Sciatic nerve (tissue), 2 donors: ENCODE measurements at regions of chr7 and their contacts with region 1.

Region 1: DNA sequence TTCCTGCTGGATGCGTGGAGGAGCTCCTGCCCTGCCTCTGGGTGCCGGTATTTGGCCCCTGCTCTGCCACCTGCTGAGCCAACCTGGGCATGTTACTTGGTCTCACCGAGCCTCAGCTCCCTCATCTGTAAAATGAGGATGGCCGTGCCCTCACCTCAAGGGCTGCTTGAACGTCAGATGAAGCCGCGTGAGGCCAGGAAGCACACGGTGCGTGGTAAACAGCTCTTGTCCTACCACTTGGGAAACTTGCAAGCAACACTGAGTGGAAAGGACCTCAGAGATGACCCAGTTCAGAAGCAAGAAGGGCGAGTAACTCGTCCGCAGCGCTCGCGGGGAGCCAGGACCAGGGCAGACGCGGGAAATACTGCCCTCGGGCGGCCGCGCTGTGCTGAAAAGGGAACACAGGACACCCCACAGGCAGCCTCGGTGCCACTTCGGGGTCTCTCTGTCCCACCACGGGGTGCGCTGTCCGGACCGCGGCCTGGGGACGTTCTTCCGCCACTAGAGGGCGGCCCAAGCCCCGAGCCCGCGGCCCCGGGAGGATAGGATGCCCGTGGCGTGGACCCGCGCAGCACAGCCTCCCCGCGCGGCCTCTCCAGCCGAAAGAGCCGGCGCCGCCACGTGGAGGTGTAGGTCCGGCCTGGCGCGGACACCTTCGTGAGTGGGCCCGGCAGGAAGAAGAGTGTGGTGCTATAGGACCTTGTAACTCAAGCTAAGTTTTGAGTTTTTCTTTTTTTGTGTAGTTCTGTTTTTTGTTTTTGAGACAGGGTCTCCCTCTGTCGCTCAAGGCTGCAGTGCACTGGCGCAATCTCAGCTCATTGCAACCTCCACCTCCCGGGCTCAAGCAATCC is 94.1 kb downstream of the PRKAG2 start:
- DNase-seq: peak; percentile 87
- ATAC-seq: peak; percentile 88

Region 2: DNA sequence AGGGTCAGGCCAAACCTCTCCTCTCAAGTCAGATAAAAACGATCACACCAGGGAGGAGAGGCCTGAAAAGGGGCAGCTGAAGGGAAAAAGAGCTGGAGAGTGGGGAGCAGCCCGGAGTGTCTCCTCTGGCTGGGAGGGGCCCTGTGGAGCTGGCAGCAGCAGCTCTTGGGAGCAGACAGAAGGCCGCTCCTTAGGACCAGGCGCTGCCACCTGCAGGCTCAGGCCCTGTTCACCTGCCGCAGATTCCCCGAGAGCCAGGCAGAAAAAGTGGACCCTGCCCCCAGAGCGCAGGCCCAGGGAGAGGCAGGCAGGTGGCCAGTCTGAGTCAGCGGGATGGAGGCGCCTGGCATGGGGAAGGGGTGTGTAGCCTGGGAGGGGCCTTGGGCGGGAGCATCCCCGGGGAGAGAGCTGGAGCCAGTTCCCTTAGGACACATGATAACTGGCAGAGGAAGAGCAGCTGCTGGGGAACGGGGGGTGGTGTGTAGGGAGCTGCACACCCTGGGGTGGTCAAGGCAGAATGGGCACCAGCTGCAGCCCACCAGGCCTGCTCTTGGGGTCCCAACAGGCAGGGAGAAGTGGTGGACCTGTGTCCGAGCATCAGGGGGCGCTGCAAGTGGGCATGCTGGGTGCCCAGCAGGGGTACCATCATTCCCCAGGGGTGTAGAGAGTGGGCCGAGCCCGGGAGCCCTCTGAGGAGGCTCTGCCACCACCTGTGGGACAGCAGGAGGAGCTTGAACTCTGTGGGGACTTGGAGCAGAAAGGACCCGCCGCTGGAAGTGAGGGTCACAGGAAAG is 85.9 kb before region 1 on chr7:
- intact Hi-C with region 1: no loop called
- DNase-seq: no peak
- ATAC-seq: no peak

Region 3: GRCh38 chr7:151936207-151936606 is 153.4 kb after region 1 on chr7:
- intact Hi-C with region 1: loop called (anchors 10 kb)
- DNase-seq: no peak
- ATAC-seq: no peak

Region 4: DNA sequence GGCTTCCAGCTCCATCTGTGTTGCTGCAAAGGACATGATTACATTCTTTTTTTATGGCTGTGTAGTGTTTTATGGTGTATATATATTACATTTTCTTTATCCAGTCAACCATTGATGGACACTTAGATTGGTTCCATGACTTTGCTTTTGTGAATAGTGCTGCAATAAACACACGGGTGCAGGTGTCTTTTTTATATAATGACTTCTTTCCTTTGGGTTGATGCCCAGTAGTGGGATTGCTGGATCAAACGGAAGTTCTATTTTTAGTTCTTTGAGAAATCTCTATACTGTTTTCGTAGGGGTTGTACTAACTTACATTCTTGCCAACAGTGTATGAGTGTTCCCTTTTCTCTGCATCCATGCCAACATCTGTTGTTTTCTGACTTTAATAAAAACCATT is 1166.4 kb after region 1 on chr7:
- intact Hi-C with region 1: no loop called
- DNase-seq: no peak
- ATAC-seq: no peak